Activated CD8-positive, alpha-beta T cell treated with anti-CD3 and anti-CD28 coated beads for 36 hours (primary cell): ENCODE measurements at regions of chr3 and their contacts with region 1.

Region 1: DNA sequence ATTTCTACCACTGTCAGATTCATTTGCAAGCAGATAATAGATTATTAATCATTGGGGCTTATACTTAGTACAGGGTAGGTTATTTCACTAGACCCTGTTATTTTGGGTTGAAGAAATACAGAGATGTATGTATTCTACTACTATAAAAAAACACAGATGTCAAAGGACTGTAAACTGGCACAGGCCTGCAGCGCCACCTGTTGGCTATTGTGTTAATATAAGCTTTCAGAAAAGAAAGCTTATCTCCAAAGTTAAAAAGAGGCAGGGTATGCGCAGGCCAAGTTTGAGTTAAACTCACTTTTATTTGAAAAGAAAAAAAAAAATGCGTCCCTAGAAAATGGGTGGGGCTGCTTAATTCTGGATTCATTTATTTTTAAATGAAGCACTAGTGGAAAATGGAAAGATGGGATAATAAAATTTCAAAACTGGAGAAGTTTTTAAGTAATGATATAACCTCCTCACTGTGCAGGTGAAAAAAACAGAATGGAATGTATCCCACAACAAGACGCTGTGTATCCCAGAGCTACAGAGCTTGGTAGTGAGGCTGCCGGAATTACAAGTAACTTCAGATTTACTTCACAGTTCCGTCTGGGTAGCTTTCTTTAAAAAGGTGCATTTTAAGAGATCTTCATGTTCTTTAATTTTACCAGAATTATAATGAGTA is 407.2 kb upstream of the TGFBR2 start:
- DNase-seq: peak; percentile 84
- ATAC-seq: no peak
- H3K4me3 Mint-ChIP-seq: no peak overlapping the region
- H3K27ac Mint-ChIP-seq: no peak overlapping the region
- H3K4me1 Mint-ChIP-seq: no peaks in the 10 kb centered on the region
- H3K27me3 Mint-ChIP-seq: no peaks in the 10 kb centered on the region
- CTCF ChIP-seq: peak; percentile 92

Region 2: GRCh38 chr3:30042274-30042859 is 156.9 kb before region 1 on chr3:
- CTCF ChIA-PET with region 1: interaction called, 84 read pairs
- POLR2A ChIA-PET with region 1: no interaction called
- intact Hi-C with region 1: loop called (anchors 2 kb)
- DNase-seq: peak; percentile 78
- ATAC-seq: no peak
- H3K4me3 Mint-ChIP-seq: no peak overlapping the region
- H3K27ac Mint-ChIP-seq: no peak overlapping the region
- H3K4me1 Mint-ChIP-seq: no peaks in the 10 kb centered on the region
- H3K27me3 Mint-ChIP-seq: peaks cover 28% of the 10 kb centered on the region
- CTCF ChIP-seq: peak; percentile 66

Region 3: GRCh38 chr3:30167541-30168011 is 31.7 kb before region 1 on chr3:
- CTCF ChIA-PET with region 1: interaction called, 11 read pairs
- POLR2A ChIA-PET with region 1: interaction called, 3 read pairs
- intact Hi-C with region 1: no loop called
- DNase-seq: no peak
- ATAC-seq: no peak
- H3K4me3 Mint-ChIP-seq: no peak overlapping the region
- H3K27ac Mint-ChIP-seq: no peak overlapping the region
- H3K4me1 Mint-ChIP-seq: no peaks in the 10 kb centered on the region
- H3K27me3 Mint-ChIP-seq: no peaks in the 10 kb centered on the region
- CTCF ChIP-seq: no peak

Region 4: DNA sequence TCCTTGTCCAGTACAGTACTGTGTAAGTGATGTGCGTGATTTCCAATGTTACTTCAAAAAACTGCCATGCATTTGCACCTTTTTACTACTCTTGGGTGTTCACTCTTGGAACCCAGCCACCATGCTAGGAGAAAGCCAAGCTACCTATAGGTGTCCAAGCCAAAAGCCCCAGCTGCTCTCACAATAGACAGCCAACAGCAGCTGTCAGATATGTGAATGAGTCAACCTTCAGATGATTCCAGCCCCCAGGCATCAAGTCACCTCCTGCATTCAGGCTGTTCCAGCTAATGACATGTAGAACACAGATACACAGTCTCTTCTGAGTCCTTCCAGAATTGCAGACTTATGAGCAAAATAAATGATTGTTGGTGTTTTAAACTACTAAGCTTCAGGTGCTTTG is 10.5 kb before region 1 on chr3:
- CTCF ChIA-PET with region 1: interaction called, 23 read pairs
- POLR2A ChIA-PET with region 1: no interaction called
- intact Hi-C with region 1: no loop called
- DNase-seq: no peak
- ATAC-seq: no peak
- H3K4me3 Mint-ChIP-seq: no peak overlapping the region
- H3K27ac Mint-ChIP-seq: no peak overlapping the region
- H3K4me1 Mint-ChIP-seq: no peaks in the 10 kb centered on the region
- H3K27me3 Mint-ChIP-seq: peaks cover 11% of the 10 kb centered on the region
- CTCF ChIP-seq: no peak

Region 5: GRCh38 chr3:30226601-30227151 is 27.4 kb after region 1 on chr3:
- CTCF ChIA-PET with region 1: interaction called, 15 read pairs
- POLR2A ChIA-PET with region 1: no interaction called
- intact Hi-C with region 1: no loop called
- DNase-seq: no peak
- ATAC-seq: no peak
- H3K4me3 Mint-ChIP-seq: no peak overlapping the region
- H3K27ac Mint-ChIP-seq: no peak overlapping the region
- H3K4me1 Mint-ChIP-seq: peaks cover 14% of the 10 kb centered on the region
- H3K27me3 Mint-ChIP-seq: no peaks in the 10 kb centered on the region
- CTCF ChIP-seq: no peak

Region 6: DNA sequence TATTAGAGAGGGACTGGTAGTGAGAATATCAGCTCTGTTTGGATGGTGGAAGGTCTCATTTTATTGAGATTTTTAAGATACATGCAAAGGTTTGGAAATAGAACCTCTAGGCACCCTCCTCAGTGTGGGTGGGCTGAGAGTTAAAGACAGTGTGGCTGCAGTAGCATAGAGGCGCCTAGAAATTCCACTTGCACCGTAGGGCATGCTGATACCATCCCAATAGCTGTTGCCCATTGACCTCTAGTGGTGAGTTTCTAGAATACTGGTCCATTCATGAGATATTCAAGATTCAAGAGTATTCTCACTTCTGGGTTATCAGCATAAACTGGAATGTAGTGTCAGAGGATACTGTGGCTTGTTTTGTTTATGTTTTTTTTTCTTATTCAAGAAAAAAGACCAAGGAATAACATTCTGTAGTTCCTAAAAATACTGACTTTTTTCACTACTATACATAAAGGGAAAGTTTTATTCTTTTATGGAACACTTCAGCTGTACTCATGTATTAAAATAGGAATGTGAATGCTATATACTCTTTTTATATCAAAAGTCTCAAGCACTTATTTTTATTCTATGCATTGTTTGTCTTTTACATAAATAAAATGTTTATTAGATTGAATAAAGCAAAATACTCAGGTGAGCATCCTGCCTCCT is 494.4 kb after region 1 on chr3:
- CTCF ChIA-PET with region 1: interaction called, 18 read pairs
- POLR2A ChIA-PET with region 1: no interaction called
- intact Hi-C with region 1: no loop called
- DNase-seq: peak; percentile 55
- ATAC-seq: peak; percentile 88
- H3K4me3 Mint-ChIP-seq: no peak overlapping the region
- H3K27ac Mint-ChIP-seq: peak overlapping the region; percentile 82
- H3K4me1 Mint-ChIP-seq: peaks cover 76% of the 10 kb centered on the region
- H3K27me3 Mint-ChIP-seq: no peaks in the 10 kb centered on the region
- CTCF ChIP-seq: peak; percentile 84